Caco-2 (cell line): ENCODE measurements at regions of chr1 and their contacts with region 1.

Region 1: GRCh38 chr1:69426401-69426800 is 141.3 kb upstream of the LRRC7 start:
- DNase-seq: no peak
- H3K4me3 ChIP-seq: no peak overlapping the region
- H3K4me3 Mint-ChIP-seq: no peak overlapping the region
- H3K27ac Mint-ChIP-seq: no peak overlapping the region
- H3K4me1 ChIP-seq: peaks cover 55% of the 10 kb centered on the region
- H3K4me1 Mint-ChIP-seq: peaks cover 13% of the 10 kb centered on the region
- H3K27me3 ChIP-seq: no peaks in the 10 kb centered on the region
- H3K27me3 Mint-ChIP-seq: no peaks in the 10 kb centered on the region
- CTCF ChIP-seq: no peak

Region 2: DNA sequence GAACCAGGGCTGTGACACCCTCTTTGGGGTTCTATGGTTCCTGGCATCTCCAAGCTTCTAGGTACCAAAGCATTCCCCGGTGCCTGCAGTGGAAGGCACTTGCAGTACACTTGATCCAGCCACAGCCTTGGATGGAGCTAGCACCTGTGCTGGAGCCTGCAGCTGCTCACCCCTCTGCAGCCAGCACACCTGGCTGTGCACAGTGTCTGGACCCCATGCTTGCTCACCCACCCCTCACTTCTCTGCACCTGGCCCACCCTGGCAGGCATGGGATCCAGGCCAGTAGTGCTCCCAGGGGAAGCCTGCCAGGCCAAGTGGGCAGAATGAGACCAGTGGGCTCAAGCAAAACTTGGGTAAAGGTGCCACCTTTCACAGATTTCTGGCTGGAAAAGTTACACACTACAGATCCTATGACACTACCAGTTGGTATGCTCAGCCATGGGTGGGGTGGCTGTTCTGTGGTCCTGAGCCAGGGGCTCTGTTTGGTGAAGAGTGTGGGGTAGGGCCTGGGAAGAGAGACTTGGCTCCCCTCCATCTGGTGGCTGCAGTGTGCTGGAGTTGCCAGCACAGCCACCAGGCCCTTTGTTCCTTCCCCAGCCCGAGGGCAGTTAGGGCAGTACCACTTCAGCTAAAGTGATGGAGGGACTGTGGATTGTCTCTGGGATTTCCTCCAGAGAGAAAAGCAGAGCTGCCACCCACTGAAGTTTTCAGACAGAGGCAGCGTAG is 16.5 kb before region 1 on chr1:
- CTCF ChIA-PET with region 1: interaction called, 3 read pairs
- POLR2A ChIA-PET with region 1: no interaction called
- intact Hi-C with region 1: loop called (anchors 1 kb)
- DNase-seq: no peak
- H3K4me3 ChIP-seq: no peak overlapping the region
- H3K4me3 Mint-ChIP-seq: no peak overlapping the region
- H3K27ac Mint-ChIP-seq: no peak overlapping the region
- H3K4me1 ChIP-seq: peaks cover 31% of the 10 kb centered on the region
- H3K4me1 Mint-ChIP-seq: peaks cover under 1% of the 10 kb centered on the region
- H3K27me3 ChIP-seq: no peaks in the 10 kb centered on the region
- H3K27me3 Mint-ChIP-seq: no peaks in the 10 kb centered on the region
- CTCF ChIP-seq: no peak

Region 3: GRCh38 chr1:69567652-69568420 is 141.4 kb after region 1 on chr1 and contains the start of gene LRRC7:
- CTCF ChIA-PET with region 1: no interaction called
- POLR2A ChIA-PET with region 1: no interaction called
- intact Hi-C with region 1: loop called (anchors 5 kb)
- DNase-seq: peak; percentile 32 to 42
- H3K4me3 ChIP-seq: peak within 1 kb of the TSS; percentile 48
- H3K4me3 Mint-ChIP-seq: peak within 1 kb of the TSS; percentile 97
- H3K27ac Mint-ChIP-seq: peak within 1 kb of the TSS; percentile 89
- H3K4me1 ChIP-seq: 0 out of 2 replicates have a peak, but pooled peaks cover 3% of the 10 kb centered on the region
- H3K4me1 Mint-ChIP-seq: no peaks in the 10 kb centered on the region
- H3K27me3 ChIP-seq: no peaks in the 10 kb centered on the region
- H3K27me3 Mint-ChIP-seq: no peaks in the 10 kb centered on the region
- CTCF ChIP-seq: no peak
- total RNA-seq, gene LRRC7: 8.5 and 10.6 TPM in 2 replicates

Region 4: DNA sequence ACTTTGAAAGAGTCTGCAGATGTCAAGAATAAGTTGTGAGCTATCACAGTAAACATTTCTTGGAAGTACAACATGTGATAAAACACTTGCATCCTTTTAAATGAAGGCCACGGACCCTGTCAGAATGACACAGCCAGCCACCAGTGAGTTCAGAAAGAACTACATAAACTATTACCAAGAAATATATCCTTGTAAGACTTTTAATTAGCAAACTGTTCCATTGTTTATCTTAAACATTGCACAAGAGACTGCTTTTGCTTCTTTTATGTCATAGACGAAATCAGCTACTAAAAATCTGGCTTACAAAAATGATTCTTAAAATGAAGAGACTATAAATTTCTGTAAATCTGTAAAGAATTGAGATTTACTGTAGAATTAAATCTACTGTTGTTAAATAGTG is 159.3 kb after region 1 on chr1:
- CTCF ChIA-PET with region 1: no interaction called
- POLR2A ChIA-PET with region 1: no interaction called
- intact Hi-C with region 1: no loop called
- DNase-seq: no peak
- H3K4me3 ChIP-seq: no peak overlapping the region
- H3K4me3 Mint-ChIP-seq: no peak overlapping the region
- H3K27ac Mint-ChIP-seq: no peak overlapping the region
- H3K4me1 ChIP-seq: no peaks in the 10 kb centered on the region
- H3K4me1 Mint-ChIP-seq: no peaks in the 10 kb centered on the region
- H3K27me3 ChIP-seq: no peaks in the 10 kb centered on the region
- H3K27me3 Mint-ChIP-seq: no peaks in the 10 kb centered on the region
- CTCF ChIP-seq: no peak

Region 5: GRCh38 chr1:69911301-69911801 is 484.9 kb after region 1 on chr1:
- CTCF ChIA-PET with region 1: no interaction called
- POLR2A ChIA-PET with region 1: no interaction called
- intact Hi-C with region 1: no loop called
- DNase-seq: no peak
- H3K4me3 ChIP-seq: no peak overlapping the region
- H3K4me3 Mint-ChIP-seq: no peak overlapping the region
- H3K27ac Mint-ChIP-seq: no peak overlapping the region
- H3K4me1 ChIP-seq: no peaks in the 10 kb centered on the region
- H3K4me1 Mint-ChIP-seq: no peaks in the 10 kb centered on the region
- H3K27me3 ChIP-seq: no peaks in the 10 kb centered on the region
- H3K27me3 Mint-ChIP-seq: no peaks in the 10 kb centered on the region
- CTCF ChIP-seq: no peak